B cell (primary cell): ENCODE measurements at regions of chr19 and their contacts with region 1.

Region 1: DNA sequence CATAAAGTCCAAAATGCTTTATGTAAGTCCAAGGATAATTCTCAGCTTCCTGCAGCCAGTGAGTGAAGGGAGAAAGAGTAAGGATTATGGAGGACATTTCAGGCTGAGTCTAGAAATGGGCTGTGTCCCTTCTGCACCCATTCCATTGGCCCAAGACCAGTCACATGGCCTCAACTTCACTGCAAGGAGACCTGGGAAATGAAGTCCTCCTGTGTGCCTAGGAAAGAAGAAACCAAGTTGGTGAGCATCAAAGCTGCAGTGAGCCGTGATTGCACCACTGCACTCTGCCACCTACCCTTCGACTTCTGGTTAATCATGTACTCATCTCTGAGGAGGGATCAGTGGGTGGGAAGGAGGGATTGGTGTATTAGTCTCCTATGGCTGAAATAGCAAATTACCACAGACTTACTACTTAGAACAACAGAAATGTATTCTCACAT is 3.6 kb upstream of the CD37 start:
- DNase-seq: peak; percentile 83
- ATAC-seq: peak; percentile 29
- H3K4me3 ChIP-seq: peak overlapping the region in 1 of 5 experiments; percentile 35
- H3K4me3 Mint-ChIP-seq: peak overlapping the region; percentile 65
- H3K27ac ChIP-seq: peak overlapping the region; percentile 93 to 98
- H3K27ac Mint-ChIP-seq: peak overlapping the region; percentile 99
- H3K4me1 ChIP-seq: peaks cover 79 to 89% of the 10 kb centered on the region in 2 donors
- H3K4me1 Mint-ChIP-seq: peaks cover 82% of the 10 kb centered on the region
- H3K27me3 ChIP-seq: no peaks in the 10 kb centered on the region
- H3K27me3 Mint-ChIP-seq: no peaks in the 10 kb centered on the region
- CTCF ChIP-seq: no peak

Region 2: GRCh38 chr19:49309087-49309486 is 22.5 kb before region 1 on chr19:
- CTCF ChIA-PET with region 1: interaction called, 10 read pairs
- POLR2A ChIA-PET with region 1: interaction called, 26 read pairs
- intact Hi-C with region 1: no loop called
- DNase-seq: no peak
- ATAC-seq: no peak
- H3K4me3 ChIP-seq: no peak overlapping the region
- H3K4me3 Mint-ChIP-seq: peak overlapping the region; percentile 35
- H3K27ac ChIP-seq: peak overlapping the region in 1 of 2 donors; percentile 10
- H3K27ac Mint-ChIP-seq: peak overlapping the region; percentile 78
- H3K4me1 ChIP-seq: peaks cover 16 to 38% of the 10 kb centered on the region in 2 donors
- H3K4me1 Mint-ChIP-seq: peaks cover 46% of the 10 kb centered on the region
- H3K27me3 ChIP-seq: no peaks in the 10 kb centered on the region
- H3K27me3 Mint-ChIP-seq: no peaks in the 10 kb centered on the region
- CTCF ChIP-seq: no peak

Region 3: GRCh38 chr19:49363268-49364082 is 31.8 kb after region 1 on chr19 and contains the start of gene DKKL1:
- CTCF ChIA-PET with region 1: interaction called, 4 read pairs
- POLR2A ChIA-PET with region 1: interaction called, 12 read pairs
- intact Hi-C with region 1: loop called (anchors 5 kb)
- DNase-seq: peak; percentile 88
- ATAC-seq: peak; percentile 80
- H3K4me3 ChIP-seq: peak within 1 kb of the TSS in 4 of 5 experiments; percentile 45 to 83 (median 58)
- H3K4me3 Mint-ChIP-seq: peak within 1 kb of the TSS; percentile 35
- H3K27ac ChIP-seq: peak within 1 kb of the TSS in 1 of 2 donors; percentile 6
- H3K27ac Mint-ChIP-seq: no peak within 1 kb of the TSS
- H3K4me1 ChIP-seq: peaks cover 46 to 55% of the 10 kb centered on the region in 2 donors
- H3K4me1 Mint-ChIP-seq: peaks cover 37% of the 10 kb centered on the region
- H3K27me3 ChIP-seq: peaks cover 0 to 10% (median 3%) of the 10 kb centered on the region in 4 experiments
- H3K27me3 Mint-ChIP-seq: no peaks in the 10 kb centered on the region
- CTCF ChIP-seq: no peak
- total RNA-seq, gene DKKL1: 0.68 and 1.2 TPM in 2 replicates

Region 4: DNA sequence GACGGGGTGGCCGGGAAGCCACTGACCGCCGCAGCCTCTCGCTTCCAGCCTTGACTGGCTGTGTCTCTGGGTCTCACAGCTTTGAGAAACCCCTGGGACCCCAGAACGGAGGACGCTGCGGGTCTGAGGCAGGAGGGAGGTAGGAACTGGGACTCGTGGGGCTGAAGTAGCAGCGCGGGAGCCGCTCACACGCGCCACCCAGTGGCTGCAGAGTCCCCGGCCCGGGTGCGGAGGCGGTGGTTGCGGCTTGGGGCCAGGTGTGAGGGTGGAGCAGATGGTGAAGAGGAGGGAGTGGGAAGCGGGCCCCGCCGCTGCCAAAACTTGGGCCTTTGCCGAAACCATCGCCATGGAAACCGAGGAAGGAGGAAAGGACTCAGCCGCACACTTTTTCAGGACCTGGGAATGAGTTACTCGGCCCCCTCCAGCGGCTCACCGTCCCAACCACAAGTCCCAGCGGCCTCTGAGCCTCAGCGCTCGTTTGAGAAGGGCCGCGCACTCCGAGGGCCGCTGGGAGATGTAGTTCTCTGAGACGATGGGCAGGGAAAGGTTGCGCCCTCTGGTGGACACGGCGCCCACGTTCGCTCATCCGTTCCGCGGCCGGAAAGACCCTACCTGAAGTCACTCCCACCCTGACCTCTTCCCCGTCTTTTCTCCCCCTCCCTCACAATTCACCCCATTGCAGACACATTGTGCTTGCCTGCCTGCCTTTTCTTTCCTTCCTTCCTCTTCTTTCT is 111.9 kb after region 1 on chr19:
- CTCF ChIA-PET with region 1: interaction called, 6 read pairs
- POLR2A ChIA-PET with region 1: interaction called, 20 read pairs
- intact Hi-C with region 1: no loop called
- DNase-seq: peak; percentile 98
- ATAC-seq: peak; percentile 85
- H3K4me3 ChIP-seq: peak overlapping the region; percentile 12 to 80 (median 71)
- H3K4me3 Mint-ChIP-seq: peak overlapping the region; percentile 93
- H3K27ac ChIP-seq: peak overlapping the region; percentile 65 to 72
- H3K27ac Mint-ChIP-seq: peak overlapping the region; percentile 95
- H3K4me1 ChIP-seq: peaks cover 18 to 31% of the 10 kb centered on the region in 2 donors
- H3K4me1 Mint-ChIP-seq: peaks cover 35% of the 10 kb centered on the region
- H3K27me3 ChIP-seq: peaks cover 2 to 39% (median 34%) of the 10 kb centered on the region in 4 experiments
- H3K27me3 Mint-ChIP-seq: peaks cover 37% of the 10 kb centered on the region
- CTCF ChIP-seq: peak; percentile 89

Region 5: DNA sequence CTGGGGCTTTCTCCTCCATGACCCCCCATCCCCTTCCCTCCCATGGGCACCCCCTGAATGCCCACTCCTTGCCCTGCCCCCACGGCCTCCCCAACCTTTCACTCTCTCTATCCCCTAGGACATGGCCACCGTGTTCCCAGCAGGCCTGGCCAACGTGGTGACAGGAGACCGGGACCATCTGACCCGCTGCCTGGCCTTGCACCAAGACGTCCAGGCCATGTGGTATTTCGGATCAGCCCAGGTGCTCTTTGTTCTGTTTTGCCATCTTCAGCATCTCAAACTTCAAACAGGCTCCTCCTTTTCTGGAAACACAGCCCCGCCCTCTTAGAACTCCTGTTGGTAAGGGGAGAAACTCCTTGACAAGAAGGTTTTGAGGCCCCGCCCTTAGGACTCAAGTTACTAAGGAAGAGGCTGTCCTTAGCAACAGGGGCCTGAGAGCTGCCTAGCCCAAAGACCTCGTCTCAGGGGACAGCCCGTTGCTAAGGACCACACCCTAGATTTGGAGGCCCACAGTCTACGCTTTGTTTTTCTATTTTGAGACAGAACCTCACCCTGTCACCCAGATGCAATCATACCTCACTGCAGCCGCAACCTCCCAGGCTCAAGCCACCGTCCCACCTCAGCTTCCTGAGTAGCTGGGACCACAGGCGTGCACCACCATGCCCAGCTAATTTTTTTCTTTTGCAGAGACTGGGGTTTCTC is 137.3 kb after region 1 on chr19:
- CTCF ChIA-PET with region 1: interaction called, 8 read pairs
- POLR2A ChIA-PET with region 1: interaction called, 17 read pairs
- intact Hi-C with region 1: loop called (anchors 1 kb)
- DNase-seq: peak; percentile 98
- ATAC-seq: peak; percentile 75
- H3K4me3 ChIP-seq: peak overlapping the region in 1 of 5 experiments; percentile 18
- H3K4me3 Mint-ChIP-seq: peak overlapping the region; percentile 74
- H3K27ac ChIP-seq: peak overlapping the region; percentile 96 to 98
- H3K27ac Mint-ChIP-seq: peak overlapping the region; percentile 98
- H3K4me1 ChIP-seq: peaks cover 44 to 57% of the 10 kb centered on the region in 2 donors
- H3K4me1 Mint-ChIP-seq: peaks cover 41% of the 10 kb centered on the region
- H3K27me3 ChIP-seq: no peaks in the 10 kb centered on the region
- H3K27me3 Mint-ChIP-seq: no peaks in the 10 kb centered on the region
- CTCF ChIP-seq: no peak

Region 6: DNA sequence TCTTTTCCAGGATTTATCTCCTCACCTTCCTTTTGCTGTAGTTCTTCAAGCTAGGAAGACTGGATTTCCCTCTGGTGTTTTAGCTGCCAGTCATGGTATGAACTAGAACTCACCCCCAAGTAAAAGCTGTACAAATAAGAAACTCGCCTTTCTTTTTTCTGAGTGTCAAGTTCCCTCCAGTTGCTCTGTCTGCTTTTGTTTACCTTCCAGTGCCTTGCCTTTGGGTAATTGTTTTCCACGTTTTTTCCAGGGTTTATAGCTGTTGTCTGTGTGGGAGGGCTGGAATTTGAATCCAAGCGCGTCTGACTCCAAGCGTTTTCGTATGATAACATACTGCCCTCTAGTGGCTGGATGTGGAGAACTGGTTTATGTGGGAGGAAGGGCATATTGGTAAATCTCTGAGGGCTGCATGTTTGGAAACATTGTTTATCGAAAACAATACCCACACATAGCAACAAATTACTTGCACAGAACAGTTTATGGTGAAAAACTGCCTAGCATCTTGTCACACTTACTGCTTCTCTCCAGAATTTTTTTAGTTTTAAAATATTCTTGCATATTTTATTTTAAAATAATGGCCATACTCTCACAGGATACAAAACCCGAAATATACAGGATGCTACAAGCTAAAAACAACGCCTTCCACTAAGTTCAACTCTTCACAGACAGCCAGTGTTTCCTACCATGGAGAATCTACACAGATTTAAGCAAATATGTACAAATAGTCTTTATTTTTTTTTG is 215.4 kb after region 1 on chr19:
- CTCF ChIA-PET with region 1: no interaction called
- POLR2A ChIA-PET with region 1: no interaction called
- intact Hi-C with region 1: no loop called
- DNase-seq: peak; percentile 88
- ATAC-seq: peak; percentile 63
- H3K4me3 ChIP-seq: peak overlapping the region in 2 of 5 experiments; percentile 1 to 18
- H3K4me3 Mint-ChIP-seq: peak overlapping the region; percentile 73
- H3K27ac ChIP-seq: no peak overlapping the region
- H3K27ac Mint-ChIP-seq: peak overlapping the region; percentile 79
- H3K4me1 ChIP-seq: peaks cover 4 to 8% of the 10 kb centered on the region in 2 donors
- H3K4me1 Mint-ChIP-seq: peaks cover 13% of the 10 kb centered on the region
- H3K27me3 ChIP-seq: no peaks in the 10 kb centered on the region
- H3K27me3 Mint-ChIP-seq: no peaks in the 10 kb centered on the region
- CTCF ChIP-seq: peak; percentile 91

Region 7: DNA sequence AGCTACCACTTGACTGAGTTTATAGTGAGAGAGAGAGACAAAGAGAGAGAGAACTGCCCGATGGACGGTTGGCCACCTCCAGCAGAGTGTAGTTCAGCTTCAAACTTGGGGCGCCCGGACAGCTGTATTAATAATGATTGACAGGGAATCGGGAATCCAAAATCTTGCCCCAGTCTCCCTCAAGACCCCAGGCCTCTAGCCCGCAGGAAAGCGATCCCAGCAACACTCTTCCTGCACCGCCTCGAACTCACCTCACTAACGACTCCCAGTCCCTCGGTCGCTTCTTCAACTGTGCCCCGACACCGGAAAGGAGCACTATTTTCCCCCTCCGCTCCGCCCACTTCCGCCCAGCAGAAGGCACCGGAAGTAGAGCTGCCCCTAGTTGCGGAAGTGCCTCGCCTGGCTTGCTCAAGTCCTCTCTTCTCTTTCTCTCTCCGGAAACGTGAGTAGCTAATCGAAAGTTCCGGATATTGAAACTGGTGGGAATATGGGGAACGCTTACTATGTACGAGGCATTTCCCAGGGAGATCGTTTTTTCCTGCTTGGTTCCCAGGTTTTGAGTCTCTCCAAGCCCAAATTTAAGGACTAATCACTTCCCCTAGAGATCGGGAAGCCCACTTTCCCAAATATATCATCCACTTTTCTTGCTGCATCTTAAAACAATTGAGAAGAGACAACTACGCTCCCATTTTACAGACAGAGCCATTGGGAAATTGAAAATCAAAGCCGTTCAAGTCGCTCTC is 248.8 kb after region 1 on chr19 and contains the start of gene NOSIP:
- CTCF ChIA-PET with region 1: no interaction called
- POLR2A ChIA-PET with region 1: interaction called, 10 read pairs
- intact Hi-C with region 1: no loop called
- DNase-seq: peak; percentile 97
- ATAC-seq: peak; percentile 95
- H3K4me3 ChIP-seq: peak within 1 kb of the TSS; percentile 61 to 92 (median 87)
- H3K4me3 Mint-ChIP-seq: peak within 1 kb of the TSS; percentile 89
- H3K27ac ChIP-seq: peak within 1 kb of the TSS; percentile 5 to 74
- H3K27ac Mint-ChIP-seq: peak within 1 kb of the TSS; percentile 88
- H3K4me1 ChIP-seq: peaks cover 16 to 23% of the 10 kb centered on the region in 2 donors
- H3K4me1 Mint-ChIP-seq: peaks cover 29% of the 10 kb centered on the region
- H3K27me3 ChIP-seq: no peaks in the 10 kb centered on the region
- H3K27me3 Mint-ChIP-seq: no peaks in the 10 kb centered on the region
- CTCF ChIP-seq: no peak
- total RNA-seq, gene NOSIP: 55.5 and 65.2 TPM in 2 replicates